Pancreas (tissue), 10 donors: ENCODE measurements at regions of chr1 and their contacts with region 1.

Region 1: DNA sequence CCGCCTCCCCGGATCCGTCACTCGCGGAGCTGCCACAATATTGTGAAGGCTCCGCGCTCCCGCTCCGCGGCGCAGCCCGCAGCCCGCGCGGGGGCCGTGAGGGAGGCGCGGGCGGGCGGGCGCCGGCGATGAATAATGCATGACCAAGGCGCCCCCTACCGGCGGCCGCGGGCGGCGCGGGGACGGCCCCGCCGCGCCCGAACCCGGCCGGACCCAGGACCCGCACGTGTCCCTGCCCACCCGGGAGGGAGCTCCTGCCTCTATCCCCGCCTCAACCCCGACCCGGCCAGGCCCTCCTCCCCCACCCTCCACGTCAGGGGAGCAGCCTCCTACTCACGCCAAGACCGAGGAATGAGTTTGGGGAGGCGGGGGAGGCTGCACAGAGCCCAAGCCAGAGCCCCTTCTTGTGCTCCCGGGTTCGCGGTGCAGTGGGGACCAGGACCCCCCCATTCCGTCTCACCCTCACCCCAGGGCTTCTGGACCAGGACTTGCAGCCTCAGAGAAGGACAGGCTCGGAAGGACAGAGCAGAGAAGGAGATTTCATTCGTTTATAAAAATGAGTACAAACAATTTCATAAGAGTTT is 70.8 kb upstream of the CASZ1 start:
- DNase-seq: peak; percentile 30 to 90 (median 66)
- ATAC-seq: peak; percentile 87 to 95 (median 94)
- H3K4me3 ChIP-seq: peak overlapping the region in 3 of 4 donors; percentile 3 to 45 (median 20)
- H3K27ac ChIP-seq: no peak overlapping the region
- H3K4me1 ChIP-seq: no peaks in the 10 kb centered on the region
- H3K27me3 ChIP-seq: no peaks in the 10 kb centered on the region
- CTCF ChIP-seq: peak; percentile 57 to 80 (median 69)

Region 2: DNA sequence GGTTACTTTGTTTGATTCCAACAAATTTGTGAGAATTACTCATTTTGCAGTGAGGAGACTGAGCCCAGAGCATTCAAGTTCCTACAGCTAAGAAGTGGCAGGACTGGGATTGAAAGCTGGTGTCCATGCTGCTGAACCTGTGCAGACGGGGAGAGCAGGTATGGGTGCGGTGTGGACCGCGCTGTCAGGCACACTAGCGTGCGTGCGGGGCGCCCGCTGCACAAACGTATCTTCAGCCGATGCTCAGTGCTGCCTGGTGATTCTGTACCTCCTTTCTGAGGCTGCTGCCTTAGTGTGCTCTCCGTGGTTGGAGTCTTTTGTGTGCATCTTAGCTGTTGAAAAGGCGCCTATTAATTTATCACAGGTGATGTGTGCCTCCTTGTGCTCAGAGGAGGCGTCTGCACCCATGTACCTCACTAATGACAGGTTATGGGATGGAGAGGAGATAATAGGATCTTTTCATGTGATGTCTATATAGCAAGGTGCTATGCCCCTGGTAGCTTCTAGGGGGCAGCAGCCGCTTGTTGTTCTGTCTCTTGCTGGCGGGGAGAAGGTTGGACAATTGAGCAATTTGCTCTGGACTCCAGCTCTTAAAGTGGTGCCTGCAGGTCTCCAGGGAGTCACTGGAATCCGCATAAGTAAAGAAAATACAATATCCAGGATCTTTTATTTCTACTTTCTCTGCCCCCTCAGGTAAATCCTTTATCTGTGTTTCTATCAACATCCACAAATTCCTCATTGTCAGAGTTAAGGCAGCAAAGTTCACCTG is 359.9 kb before region 1 on chr1:
- intact Hi-C with region 1: loop called in 2 of 3 experiments (anchors 5 kb)
- DNase-seq: peak; percentile 47 to 67 (median 54)
- ATAC-seq: peak; percentile 89 to 93 (median 92)
- H3K4me3 ChIP-seq: no peak overlapping the region
- H3K27ac ChIP-seq: no peak overlapping the region
- H3K4me1 ChIP-seq: peaks cover 9 to 20% (median 10%) of the 10 kb centered on the region in 3 donors
- H3K27me3 ChIP-seq: no peaks in the 10 kb centered on the region
- CTCF ChIP-seq: peak; percentile 14 to 78 (median 60)

Region 3: GRCh38 chr1:10530281-10530740 is 336.9 kb before region 1 on chr1:
- intact Hi-C with region 1: loop called in 1 of 3 experiments (anchors 10 kb)
- DNase-seq: peak; percentile 40 to 83 (median 56)
- ATAC-seq: peak; percentile 73 to 92 (median 91)
- H3K4me3 ChIP-seq: no peak overlapping the region
- H3K27ac ChIP-seq: no peak overlapping the region
- H3K4me1 ChIP-seq: peaks cover 0 to 14% (median 9%) of the 10 kb centered on the region in 3 donors
- H3K27me3 ChIP-seq: no peaks in the 10 kb centered on the region
- CTCF ChIP-seq: peak; percentile 37 to 73 (median 63)

Region 4: DNA sequence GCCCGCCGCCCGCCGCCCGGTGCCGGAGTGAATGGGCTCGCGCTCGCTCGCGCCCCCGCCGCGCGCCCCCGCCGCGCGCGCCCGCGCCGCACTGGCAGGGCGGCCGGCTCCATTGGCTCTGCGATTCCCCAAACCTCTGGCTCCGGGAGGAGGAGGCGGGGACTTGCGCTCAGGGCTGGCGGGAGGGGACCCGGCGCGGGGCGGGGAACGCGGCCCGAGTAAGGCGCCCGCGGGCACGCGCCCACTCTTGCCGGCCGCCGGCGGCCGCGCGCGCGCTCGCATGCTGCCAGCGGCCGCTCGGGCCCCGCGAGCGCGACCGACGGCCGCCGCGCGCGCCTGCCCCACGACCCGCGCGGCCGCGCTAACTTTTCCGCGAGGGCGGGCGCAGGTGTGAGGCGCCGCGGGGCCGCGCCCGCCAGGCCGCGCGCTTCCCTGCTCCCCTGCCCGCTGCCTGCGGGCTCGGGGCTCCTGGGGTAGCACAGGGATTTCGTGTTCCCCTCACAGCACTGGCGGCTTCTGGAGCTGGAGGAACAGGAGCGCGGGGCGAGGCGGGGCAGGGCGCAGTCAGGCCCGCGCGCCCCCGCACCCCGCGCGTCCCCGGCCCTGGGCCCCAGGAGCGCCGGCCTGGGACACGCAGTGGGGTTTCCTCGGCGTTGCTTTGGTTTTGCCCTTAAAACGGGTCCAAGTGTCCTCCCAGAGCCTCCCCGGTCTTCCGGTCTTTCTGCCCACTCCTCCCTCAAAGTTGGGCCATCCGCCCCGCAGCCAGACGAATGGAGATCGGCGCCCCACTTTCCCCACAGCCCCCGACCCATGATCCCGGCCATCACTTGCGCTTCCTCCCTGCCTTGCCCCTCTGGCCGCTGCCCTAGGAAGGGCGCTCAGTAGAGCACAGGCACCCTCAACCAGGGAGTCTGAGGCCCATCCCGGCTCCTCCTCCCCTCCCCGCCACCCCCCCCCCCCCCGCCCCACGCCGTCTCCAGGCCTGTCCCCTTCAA is 172.3 kb before region 1 on chr1:
- intact Hi-C with region 1: loop called in 1 of 3 experiments (anchors 5 kb)
- DNase-seq: peak; percentile 89 to 95 (median 90)
- ATAC-seq: peak; percentile 71 to 86 (median 78)
- H3K4me3 ChIP-seq: peak overlapping the region in 3 of 4 donors; percentile 39 to 73 (median 58)
- H3K27ac ChIP-seq: peak overlapping the region; percentile 67 to 85 (median 78)
- H3K4me1 ChIP-seq: peaks cover 10 to 23% (median 15%) of the 10 kb centered on the region in 3 donors
- H3K27me3 ChIP-seq: no peaks in the 10 kb centered on the region
- CTCF ChIP-seq: no peak